ENCODE measurements at regions of chr19 and their contacts with region 1.

Region 1: GRCh38 chr19:18588611-18589379 is at the start of gene REX1BD:
- DNase-seq: peak; percentile 86
- H3K4me3 Mint-ChIP-seq: peak within 1 kb of the TSS; percentile 90
- H3K27ac Mint-ChIP-seq: peak within 1 kb of the TSS; percentile 91
- H3K4me1 Mint-ChIP-seq: peaks cover 43% of the 10 kb centered on the region
- H3K27me3 Mint-ChIP-seq: no peaks in the 10 kb centered on the region
- total RNA-seq, gene REX1BD: 134 and 135 TPM in 2 replicates

Region 2: DNA sequence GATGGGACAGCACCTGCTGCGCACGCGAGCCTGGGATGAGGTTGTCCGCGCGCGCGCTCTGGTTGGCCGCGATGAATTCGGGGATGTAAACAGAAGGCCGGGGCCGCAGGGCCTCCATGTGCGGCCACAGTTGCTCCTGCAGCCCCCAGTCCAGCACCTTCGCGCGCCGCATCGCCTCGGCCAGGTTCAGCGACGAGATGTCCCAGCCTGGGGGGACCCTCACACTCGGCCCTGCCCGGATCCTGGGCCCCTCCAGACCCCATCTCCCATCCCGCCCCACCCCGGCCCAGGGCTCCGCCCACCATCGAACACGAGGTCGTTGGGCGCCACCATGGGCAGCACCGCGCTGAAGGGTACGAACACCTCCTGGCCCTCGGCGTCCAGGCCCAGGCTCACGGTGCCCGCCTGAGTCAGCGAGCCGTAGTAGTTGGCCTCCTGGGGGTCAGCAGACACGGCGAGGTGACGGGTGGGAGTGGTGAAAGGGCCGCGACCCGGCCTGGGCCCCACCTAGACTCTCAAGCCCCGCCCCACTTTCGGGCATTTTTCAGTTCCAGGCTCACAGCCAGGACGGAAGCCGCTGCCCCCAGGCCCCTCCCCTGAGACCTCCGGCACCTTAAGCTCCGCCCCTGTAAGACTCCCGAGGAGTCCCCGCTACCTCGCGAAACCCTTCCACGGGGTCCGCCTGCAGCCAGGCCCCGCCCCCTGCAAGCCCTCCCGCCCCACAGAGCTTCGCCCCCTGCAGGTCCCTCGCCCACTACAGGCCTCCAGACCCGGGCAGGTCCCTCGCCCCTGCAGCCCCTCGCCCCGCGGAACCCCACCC is 151.9 kb before region 1 on chr19:
- intact Hi-C with region 1: no loop called
- DNase-seq: peak; percentile 57
- H3K4me3 Mint-ChIP-seq: peak overlapping the region; percentile 70
- H3K27ac Mint-ChIP-seq: no peak overlapping the region
- H3K4me1 Mint-ChIP-seq: peaks cover 12% of the 10 kb centered on the region
- H3K27me3 Mint-ChIP-seq: peaks cover 2% of the 10 kb centered on the region

Region 3: DNA sequence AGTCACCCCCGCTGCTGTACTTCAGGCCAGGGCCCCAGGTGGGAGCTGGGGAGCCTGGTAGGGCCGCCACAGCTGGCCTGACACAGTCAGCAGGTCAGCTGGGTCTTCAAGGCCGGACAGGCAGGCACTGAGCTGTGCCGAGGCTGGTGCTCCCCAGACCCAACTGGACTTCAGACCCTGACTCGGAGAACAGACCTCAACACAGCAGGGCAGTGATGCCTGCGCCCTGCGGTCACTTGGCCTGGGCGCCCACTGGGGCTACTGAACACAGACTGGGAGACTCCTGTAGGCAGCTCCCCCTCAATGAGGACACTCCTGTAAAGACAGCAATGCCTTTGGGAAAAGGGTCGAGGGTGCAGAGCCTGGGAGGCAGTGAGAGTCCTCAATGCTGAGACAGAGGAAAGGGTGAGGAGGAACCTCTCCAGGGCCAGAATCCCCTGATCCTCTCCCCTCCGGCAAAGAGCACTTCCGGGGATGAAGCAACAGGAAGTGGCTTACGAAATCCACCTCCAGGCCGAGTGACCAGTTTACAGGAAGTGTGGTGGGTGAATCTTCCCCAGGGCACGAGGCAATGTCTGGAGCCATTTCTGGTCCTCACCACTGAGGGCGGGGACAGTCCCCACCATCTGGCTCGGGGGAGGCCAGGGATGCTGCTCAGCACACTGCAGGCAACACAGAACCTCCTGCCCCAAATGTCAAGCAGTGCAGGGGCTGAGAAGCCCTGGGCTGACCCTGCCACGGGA is 110.1 kb before region 1 on chr19:
- intact Hi-C with region 1: loop called (anchors 5 kb)
- DNase-seq: peak; percentile 55
- H3K4me3 Mint-ChIP-seq: peak overlapping the region; percentile 71
- H3K27ac Mint-ChIP-seq: peak overlapping the region; percentile 92
- H3K4me1 Mint-ChIP-seq: peaks cover 71% of the 10 kb centered on the region
- H3K27me3 Mint-ChIP-seq: peaks cover 1% of the 10 kb centered on the region

Region 4: DNA sequence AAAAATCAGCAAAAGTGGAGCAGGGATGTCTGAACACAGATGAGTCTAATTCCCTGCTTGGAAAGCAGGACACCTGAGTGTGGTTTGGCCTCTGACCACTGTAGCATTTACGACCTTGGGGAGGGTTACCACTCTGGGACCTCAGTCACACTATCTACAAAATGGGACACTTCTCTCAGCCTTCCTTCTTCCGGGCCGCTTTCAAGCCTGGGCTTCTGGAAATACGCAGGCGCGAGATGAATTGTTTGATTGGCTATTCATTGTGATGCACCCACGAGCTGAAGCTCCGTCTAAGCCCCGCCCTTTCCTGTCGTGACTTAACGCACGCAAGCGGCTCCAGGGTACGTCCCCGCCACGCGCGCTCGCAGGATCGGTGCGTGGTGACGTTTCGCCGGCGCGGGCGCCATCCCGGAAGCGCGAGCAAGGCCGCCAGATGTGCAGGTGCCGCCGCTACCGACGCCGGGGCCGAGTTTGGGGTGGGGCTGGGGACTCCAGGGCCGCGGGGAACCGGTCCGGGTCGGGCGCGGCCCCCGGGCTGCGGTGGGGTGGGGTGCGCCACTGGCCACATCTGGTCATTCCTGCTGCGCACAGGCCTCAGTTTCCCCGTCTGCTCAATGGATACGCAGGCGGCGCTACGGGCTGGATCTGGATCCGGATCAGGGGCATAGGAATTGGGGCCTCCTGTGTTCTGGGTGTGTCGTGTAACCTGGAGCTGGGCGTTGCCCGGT is 31.2 kb before region 1 on chr19 and contains the start of gene KXD1:
- intact Hi-C with region 1: loop called (anchors 1 kb)
- DNase-seq: peak; percentile 98
- H3K4me3 Mint-ChIP-seq: peak within 1 kb of the TSS; percentile 93
- H3K27ac Mint-ChIP-seq: peak within 1 kb of the TSS; percentile 92
- H3K4me1 Mint-ChIP-seq: peaks cover 20% of the 10 kb centered on the region
- H3K27me3 Mint-ChIP-seq: no peaks in the 10 kb centered on the region
- total RNA-seq, gene KXD1: 128 and 133 TPM in 2 replicates

Region 5: GRCh38 chr19:18683213-18683939 is 94.6 kb after region 1 on chr19 and contains the start of gene CRTC1:
- intact Hi-C with region 1: loop called (anchors 5 kb)
- DNase-seq: peak; percentile 91
- H3K4me3 Mint-ChIP-seq: peak within 1 kb of the TSS; percentile 83
- H3K27ac Mint-ChIP-seq: peak within 1 kb of the TSS; percentile 80
- H3K4me1 Mint-ChIP-seq: peaks cover 6% of the 10 kb centered on the region
- H3K27me3 Mint-ChIP-seq: peaks cover 2% of the 10 kb centered on the region
- total RNA-seq, gene CRTC1: 6.1 and 7.6 TPM in 2 replicates

Region 6: DNA sequence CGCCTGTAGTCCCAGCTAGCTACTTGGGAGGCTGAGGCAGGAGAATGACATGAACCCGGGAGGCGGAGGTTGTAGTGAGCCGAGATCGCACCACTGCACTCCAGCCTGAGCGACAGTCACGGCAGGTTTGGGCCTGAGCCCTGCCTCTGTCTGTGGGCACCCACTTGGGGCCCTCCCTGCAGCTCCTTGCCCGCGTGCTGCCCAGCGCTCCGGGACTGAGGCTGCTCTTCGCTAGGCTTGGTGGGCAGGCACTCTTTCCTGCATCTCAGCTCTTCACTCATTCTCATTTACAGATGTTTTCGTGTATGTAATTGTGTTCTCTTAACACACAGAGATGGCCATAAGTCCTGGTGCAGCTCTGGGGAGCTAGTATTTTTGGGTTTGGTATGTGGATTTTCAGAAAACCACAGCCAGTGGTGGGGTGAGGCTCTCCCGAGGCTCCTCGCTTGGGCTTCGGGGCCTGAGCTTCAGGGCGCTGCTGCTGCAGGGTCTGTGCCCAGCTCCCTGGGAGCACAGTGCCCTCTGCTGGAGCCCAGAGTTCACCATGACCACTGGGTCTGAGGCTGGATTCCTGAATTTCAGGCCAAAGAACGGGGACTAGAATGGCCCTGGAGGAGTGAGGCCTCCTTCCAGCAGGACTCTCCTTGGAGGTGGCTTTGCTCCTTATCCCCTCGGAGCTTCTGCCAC is 258.2 kb after region 1 on chr19:
- intact Hi-C with region 1: loop called (anchors 5 kb)
- DNase-seq: peak; percentile 51
- H3K4me3 Mint-ChIP-seq: no peak overlapping the region
- H3K27ac Mint-ChIP-seq: no peak overlapping the region
- H3K4me1 Mint-ChIP-seq: peaks cover 55% of the 10 kb centered on the region
- H3K27me3 Mint-ChIP-seq: no peaks in the 10 kb centered on the region

Region 7: GRCh38 chr19:18912933-18913332 is 324.1 kb after region 1 on chr19:
- intact Hi-C with region 1: no loop called
- DNase-seq: no peak
- H3K4me3 Mint-ChIP-seq: no peak overlapping the region
- H3K27ac Mint-ChIP-seq: no peak overlapping the region
- H3K4me1 Mint-ChIP-seq: peaks cover 12% of the 10 kb centered on the region
- H3K27me3 Mint-ChIP-seq: no peaks in the 10 kb centered on the region